ENCODE measurements at regions of chr6 and their contacts with region 1.

Region 1: GRCh38 chr6:70955441-70956190 is 1.2 kb downstream of the B3GAT2 start:
- DNase-seq: peak; percentile 2
- ATAC-seq: peak; percentile 96
- H3K4me3 ChIP-seq: peak overlapping the region; percentile 47 to 53
- H3K27ac ChIP-seq: no peak overlapping the region
- H3K4me1 ChIP-seq: peaks cover 6% of the 10 kb centered on the region
- H3K27me3 ChIP-seq: peaks cover 58% of the 10 kb centered on the region
- CTCF ChIP-seq: peak; percentile 99

Region 2: GRCh38 chr6:70413114-70413991 is 542.3 kb before region 1 on chr6 and contains the start of gene FAM135A:
- CTCF ChIA-PET with region 1: no interaction called
- POLR2A ChIA-PET with region 1: interaction called, 12 read pairs
- in situ Hi-C with region 1: no loop called
- intact Hi-C with region 1: no loop called
- DNase-seq: peak; percentile 97
- ATAC-seq: peak; percentile 97
- H3K4me3 ChIP-seq: peak within 1 kb of the TSS; percentile 95 to 96
- H3K27ac ChIP-seq: peak within 1 kb of the TSS; percentile 97
- H3K4me1 ChIP-seq: peaks cover 5% of the 10 kb centered on the region; the same call in 1 of the 2 replicates
- H3K27me3 ChIP-seq: no peaks in the 10 kb centered on the region
- CTCF ChIP-seq: no peak
- total RNA-seq, gene FAM135A: 31.5 TPM

Region 3: GRCh38 chr6:70706491-70707123 is 249.0 kb before region 1 on chr6:
- CTCF ChIA-PET with region 1: interaction called, 5 read pairs
- POLR2A ChIA-PET with region 1: no interaction called
- in situ Hi-C with region 1: no loop called
- intact Hi-C with region 1: loop called (anchors 1 kb)
- DNase-seq: peak; percentile 20
- ATAC-seq: no peak
- H3K4me3 ChIP-seq: no peak overlapping the region
- H3K27ac ChIP-seq: no peak overlapping the region
- H3K4me1 ChIP-seq: no peaks in the 10 kb centered on the region
- H3K27me3 ChIP-seq: no peaks in the 10 kb centered on the region
- CTCF ChIP-seq: peak; percentile 68; the same call in 1 of the 2 replicates

Region 4: GRCh38 chr6:70973604-70974003 is 18.0 kb after region 1 on chr6:
- CTCF ChIA-PET with region 1: interaction called, 13 read pairs
- POLR2A ChIA-PET with region 1: no interaction called
- in situ Hi-C with region 1: no loop called
- intact Hi-C with region 1: no loop called
- DNase-seq: no peak
- ATAC-seq: no peak
- H3K4me3 ChIP-seq: no peak overlapping the region
- H3K27ac ChIP-seq: no peak overlapping the region
- H3K4me1 ChIP-seq: no peaks in the 10 kb centered on the region
- H3K27me3 ChIP-seq: peaks cover 3% of the 10 kb centered on the region; the same call in 1 of the 2 replicates
- CTCF ChIP-seq: no peak

Region 5: GRCh38 chr6:71047417-71047816 is 91.8 kb after region 1 on chr6:
- CTCF ChIA-PET with region 1: no interaction called
- POLR2A ChIA-PET with region 1: no interaction called
- in situ Hi-C with region 1: no loop called
- intact Hi-C with region 1: no loop called
- DNase-seq: no peak
- ATAC-seq: no peak
- H3K4me3 ChIP-seq: no peak overlapping the region
- H3K27ac ChIP-seq: no peak overlapping the region
- H3K4me1 ChIP-seq: no peaks in the 10 kb centered on the region
- H3K27me3 ChIP-seq: peaks cover 2% of the 10 kb centered on the region; the same call in 1 of the 2 replicates
- CTCF ChIP-seq: no peak